Lower leg skin (tissue), 4 donors: ENCODE measurements at regions of chr22 and their contacts with region 1.

Region 1: DNA sequence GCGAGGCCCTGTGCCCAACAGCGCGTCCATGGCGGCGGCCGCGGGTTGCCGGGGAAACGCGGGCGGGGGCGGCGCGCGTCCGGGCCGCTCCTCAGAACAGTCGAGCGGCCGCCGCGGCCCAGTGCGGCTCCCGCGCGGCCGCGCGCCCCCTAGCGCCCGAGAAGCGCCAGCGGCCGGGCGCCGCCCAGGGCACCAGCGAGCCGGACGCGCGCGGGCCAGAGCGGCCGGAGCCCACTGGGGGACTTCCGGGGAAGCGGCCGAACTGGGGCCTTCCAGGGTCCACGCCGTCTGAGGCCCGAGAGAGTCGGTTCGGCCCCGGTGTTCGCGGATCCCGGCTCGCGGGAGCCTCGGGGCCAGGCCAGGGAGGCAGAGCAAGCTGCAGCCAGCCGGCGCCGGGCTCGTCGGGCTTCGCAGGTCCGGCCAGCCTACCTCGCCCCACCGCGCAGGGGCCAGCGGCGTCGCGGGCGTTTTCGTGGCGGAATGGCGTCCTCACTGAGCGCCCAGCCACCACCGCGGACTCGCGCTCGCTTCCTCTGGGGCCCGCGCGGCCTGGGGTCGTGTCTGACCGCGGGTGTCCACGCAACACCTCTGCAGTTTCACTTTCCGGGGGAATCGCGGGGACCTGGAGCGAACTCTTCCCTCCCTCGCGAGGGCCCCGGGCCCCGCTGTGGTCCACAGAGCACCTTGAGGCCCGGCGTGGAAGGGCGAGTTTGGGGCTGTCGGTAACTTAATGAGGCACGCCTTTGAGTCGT is at the start of gene DENND6B:
- DNase-seq: peak in 1 of 2 donors; percentile 94
- H3K4me3 ChIP-seq: peak within 1 kb of the TSS; percentile 56
- CTCF ChIP-seq: no peak
- POLR2A ChIP-seq: no peak
- total RNA-seq, gene DENND6B: 0.97 to 8.8 (median 6.5) TPM

Region 2: DNA sequence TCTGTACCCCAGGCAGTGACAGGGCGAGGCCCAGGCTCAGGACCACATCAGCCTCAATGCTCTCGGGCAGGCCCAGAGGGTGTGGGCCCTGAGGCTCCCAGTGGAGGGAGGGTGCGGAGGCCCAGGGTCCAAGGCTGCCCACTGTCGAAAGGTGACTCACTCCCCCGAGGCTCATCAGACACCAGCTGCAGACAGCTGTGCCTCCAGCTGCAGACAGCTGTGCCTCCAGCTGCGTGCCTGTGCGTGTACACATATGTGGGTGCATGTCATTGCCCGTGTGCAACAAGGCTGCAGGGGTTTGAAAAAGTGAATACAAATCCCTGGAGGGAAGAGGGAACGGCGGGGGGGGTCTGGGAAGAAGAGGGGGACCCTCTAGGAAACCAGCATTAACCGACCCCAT is 633.7 kb before region 1 on chr22:
- intact Hi-C with region 1: no loop called
- DNase-seq: peak in 1 of 2 donors; percentile 54
- H3K4me3 ChIP-seq: no peak overlapping the region
- CTCF ChIP-seq: no peak
- POLR2A ChIP-seq: no peak

Region 3: GRCh38 chr22:50276143-50276542 is 51.0 kb before region 1 on chr22:
- intact Hi-C with region 1: loop called (anchors 10 kb)
- DNase-seq: no peak
- H3K4me3 ChIP-seq: no peak overlapping the region
- CTCF ChIP-seq: no peak
- POLR2A ChIP-seq: no peak

Region 4: DNA sequence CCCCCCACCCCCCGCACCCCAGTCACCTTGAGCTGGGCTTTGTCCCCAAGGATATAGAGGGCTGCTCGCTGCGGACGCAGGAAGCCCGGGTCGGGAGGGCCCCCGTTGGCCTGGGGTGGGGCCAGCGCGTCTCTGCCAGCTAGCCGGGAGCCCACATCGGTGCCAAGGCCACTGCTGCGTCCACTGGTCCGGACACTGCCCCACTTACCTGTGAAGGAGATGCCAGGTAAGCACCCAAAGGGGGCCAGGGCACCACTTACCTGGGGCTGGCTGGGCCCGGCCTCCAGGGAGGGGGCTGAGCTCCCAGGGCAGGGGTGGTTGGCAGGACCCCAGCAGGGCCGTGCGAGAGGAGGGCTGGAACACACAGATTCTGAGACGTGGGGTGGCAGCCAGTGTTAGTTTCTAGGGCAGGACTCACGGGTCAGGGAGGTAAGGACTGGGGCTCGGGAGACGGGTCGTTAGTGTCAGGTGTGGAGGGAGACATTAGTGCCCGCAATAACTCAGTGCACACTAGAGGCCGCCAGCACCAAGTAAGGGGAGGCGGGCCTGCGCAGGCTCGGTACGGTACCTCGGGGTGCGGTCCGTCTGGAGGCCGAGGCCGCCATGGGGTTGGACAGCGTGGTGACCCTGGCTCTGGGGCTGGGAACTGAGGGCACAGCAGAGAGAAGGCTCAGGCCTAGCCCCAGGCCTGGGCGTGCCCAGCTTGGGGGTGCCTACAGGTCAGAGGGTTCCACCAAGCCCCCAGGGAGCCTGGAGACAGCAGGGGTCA is 129.5 kb after region 1 on chr22:
- intact Hi-C with region 1: no loop called
- DNase-seq: no peak
- H3K4me3 ChIP-seq: no peak overlapping the region
- CTCF ChIP-seq: no peak
- POLR2A ChIP-seq: no peak